PC-3 (cell line): ENCODE measurements at regions of chr11 and their contacts with region 1.

Region 1: DNA sequence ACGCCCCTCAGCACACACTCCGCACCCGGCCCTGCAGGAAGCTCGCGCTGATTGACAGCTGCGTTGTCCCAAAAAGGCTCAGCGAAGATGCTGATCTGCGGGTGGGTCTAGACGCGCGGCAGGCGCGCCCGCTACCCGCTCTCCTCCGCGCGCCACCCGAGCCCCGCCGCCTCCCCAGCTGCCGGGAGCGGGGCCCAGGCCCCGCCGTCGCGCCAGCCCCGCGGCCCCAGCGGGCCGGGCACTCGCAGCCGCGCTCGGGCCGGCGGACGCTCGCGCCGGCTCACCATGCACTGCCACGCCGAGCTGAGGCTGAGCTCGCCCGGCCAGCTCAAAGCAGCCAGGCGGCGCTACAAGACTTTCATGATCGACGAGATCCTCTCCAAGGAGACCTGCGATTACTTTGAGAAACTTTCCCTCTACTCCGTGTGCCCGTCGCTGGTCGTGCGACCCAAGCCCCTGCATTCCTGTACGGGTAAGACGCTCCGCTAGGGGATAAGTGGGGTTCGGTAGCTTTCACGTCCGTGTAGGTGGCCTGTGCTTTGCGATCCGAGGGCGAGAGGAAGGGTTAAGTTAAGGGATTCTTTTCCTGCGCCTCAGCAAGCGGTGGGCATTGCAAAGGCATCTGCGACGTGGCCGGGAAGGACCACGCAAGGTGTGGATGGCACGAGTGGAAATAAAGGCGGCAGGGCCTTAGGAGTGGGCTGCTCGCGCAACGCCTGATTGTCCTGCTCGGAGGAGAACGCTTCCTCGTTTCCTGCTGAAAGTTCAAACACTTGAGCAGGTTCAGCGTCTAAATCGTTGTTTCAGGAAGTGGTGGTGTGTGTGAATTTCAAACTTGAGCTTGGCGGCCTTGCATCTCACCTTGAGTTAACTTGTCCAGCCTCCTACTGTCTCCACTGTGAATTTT is at the start of gene BARX2:
- DNase-seq: peak; percentile 86
- ATAC-seq: peak; percentile 94
- H3K4me3 ChIP-seq: peak within 1 kb of the TSS; percentile 63
- H3K27ac ChIP-seq: no peak within 1 kb of the TSS
- H3K4me1 ChIP-seq: peaks cover 19% of the 10 kb centered on the region; the same call in 1 of the 2 replicates
- H3K27me3 ChIP-seq: peaks cover 81% of the 10 kb centered on the region
- CTCF ChIP-seq: peak; percentile 73
- total RNA-seq, gene BARX2: 0.47 and 1.2 TPM in 2 replicates

Region 2: DNA sequence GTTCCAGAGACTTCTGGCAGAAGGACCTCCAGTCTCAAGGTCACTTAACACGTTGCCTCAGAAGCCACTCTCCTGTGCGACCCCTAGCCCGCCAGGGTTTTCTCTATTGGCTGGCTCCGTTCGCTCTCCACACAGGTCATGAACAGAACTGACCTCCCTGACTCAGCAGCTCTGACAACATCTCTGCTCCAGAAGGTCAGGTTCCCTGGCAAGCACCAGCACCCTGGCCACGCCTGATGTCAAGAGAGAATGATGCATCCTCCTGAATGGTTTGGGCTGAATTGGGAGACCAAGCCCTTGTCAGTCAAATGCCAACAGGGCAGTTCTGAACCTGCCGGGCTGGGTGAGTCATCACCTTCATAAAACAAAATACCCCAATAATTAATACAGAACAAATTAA is 355.3 kb after region 1 on chr11:
- CTCF ChIA-PET with region 1: interaction called, 15 read pairs
- POLR2A ChIA-PET with region 1: no interaction called
- intact Hi-C with region 1: no loop called
- DNase-seq: peak; percentile 86
- ATAC-seq: peak; percentile 84
- H3K4me3 ChIP-seq: no peak overlapping the region
- H3K27ac ChIP-seq: no peak overlapping the region
- H3K4me1 ChIP-seq: peaks cover 35% of the 10 kb centered on the region
- H3K27me3 ChIP-seq: no peaks in the 10 kb centered on the region
- CTCF ChIP-seq: no peak